SK-N-SH (cell line): ENCODE measurements at regions of chr1 and their contacts with region 1.

Region 1: GRCh38 chr1:246261639-246262038 is 245.4 kb downstream of the SMYD3 start:
- DNase-seq: no peak
- H3K4me3 ChIP-seq: no peak overlapping the region; a peak in 1 of 4 replicates
- H3K27ac ChIP-seq: no peak overlapping the region
- H3K4me1 ChIP-seq: no peaks in the 10 kb centered on the region
- H3K27me3 ChIP-seq: no peaks in the 10 kb centered on the region
- CTCF ChIP-seq: peak; percentile 50
- EP300 ChIP-seq: no peak
- RAD21 ChIP-seq: peak; percentile 46; the same call in 1 of the 2 replicates

Region 2: DNA sequence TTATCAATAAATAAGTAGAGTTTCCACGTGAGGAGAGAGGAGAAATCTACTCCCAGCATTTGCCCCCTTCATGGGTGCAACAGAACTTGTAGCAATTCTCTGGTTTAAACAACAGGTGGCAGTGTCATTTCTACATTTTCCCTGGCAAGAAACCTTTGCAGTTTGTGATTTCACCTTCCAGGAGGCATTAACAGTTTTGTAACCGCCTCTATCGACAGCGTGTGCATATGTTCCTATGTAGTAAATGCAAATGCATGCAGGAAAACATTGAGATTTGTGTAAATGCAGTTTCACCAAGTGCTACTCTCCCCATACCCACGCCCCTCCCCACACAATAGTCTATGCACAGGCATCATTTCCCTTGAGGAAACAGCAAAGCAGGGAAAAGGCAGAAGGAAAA is 249.3 kb before region 1 on chr1:
- CTCF ChIA-PET with region 1: interaction called, 10 read pairs
- POLR2A ChIA-PET with region 1: no interaction called
- DNase-seq: peak; percentile 58
- H3K4me3 ChIP-seq: no peak overlapping the region
- H3K27ac ChIP-seq: no peak overlapping the region
- H3K4me1 ChIP-seq: no peaks in the 10 kb centered on the region
- H3K27me3 ChIP-seq: no peaks in the 10 kb centered on the region
- CTCF ChIP-seq: peak; percentile 68
- EP300 ChIP-seq: no peak
- RAD21 ChIP-seq: peak; percentile 87

Region 3: DNA sequence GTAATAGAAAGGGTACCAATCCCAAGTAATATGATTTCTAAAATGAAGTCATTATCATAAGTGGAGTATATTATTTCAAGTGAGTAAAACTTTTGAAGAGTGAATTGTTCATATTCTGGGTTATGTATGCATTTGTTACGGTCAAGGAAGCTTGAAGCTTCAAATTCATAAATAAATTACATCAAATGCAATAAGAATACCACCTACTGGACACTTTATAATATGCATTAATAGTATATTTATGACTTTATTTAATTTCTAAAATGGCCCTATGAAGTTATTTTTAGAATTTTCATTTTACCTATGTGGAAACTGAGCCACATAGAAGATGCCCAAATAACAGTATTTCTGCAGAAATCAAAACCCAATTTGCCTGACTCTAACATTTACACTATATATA is 15.2 kb before region 1 on chr1:
- CTCF ChIA-PET with region 1: interaction called, 13 read pairs
- POLR2A ChIA-PET with region 1: no interaction called
- DNase-seq: no peak
- H3K4me3 ChIP-seq: no peak overlapping the region
- H3K27ac ChIP-seq: peak overlapping the region in 1 of 2 experiments; percentile 33; a peak in 2 of 4 replicates
- H3K4me1 ChIP-seq: no peaks in the 10 kb centered on the region; a peak in 1 of 4 replicates
- H3K27me3 ChIP-seq: no peaks in the 10 kb centered on the region
- CTCF ChIP-seq: peak; percentile 38
- EP300 ChIP-seq: no peak
- RAD21 ChIP-seq: peak; percentile 29; the same call in 1 of the 2 replicates

Region 4: DNA sequence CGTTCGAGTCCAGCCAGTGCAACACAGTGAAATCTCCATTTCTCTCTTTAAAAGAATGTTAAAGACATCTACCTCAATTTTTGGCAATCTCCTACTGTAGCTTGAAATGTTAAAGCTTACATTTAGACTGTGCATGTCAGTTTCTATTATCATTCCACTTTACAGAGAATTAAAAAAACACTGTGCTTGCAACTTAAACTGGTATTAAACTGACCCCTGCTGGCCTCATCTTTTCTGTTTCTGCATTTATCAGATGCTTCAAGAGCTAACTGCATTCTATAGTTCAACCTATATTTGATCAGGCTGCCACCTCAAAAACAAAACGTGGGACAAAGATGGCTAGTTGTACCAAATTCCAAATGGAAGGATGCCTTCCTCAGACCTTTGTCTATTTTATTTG is 18.9 kb after region 1 on chr1:
- CTCF ChIA-PET with region 1: interaction called, 15 read pairs
- POLR2A ChIA-PET with region 1: no interaction called
- DNase-seq: peak; percentile 25
- H3K4me3 ChIP-seq: no peak overlapping the region
- H3K27ac ChIP-seq: peak overlapping the region in 1 of 2 experiments; percentile 58; a peak in 1 of 4 replicates
- H3K4me1 ChIP-seq: peaks cover 0 to 13% of the 10 kb centered on the region in 2 experiments; a peak in 2 of 4 replicates
- H3K27me3 ChIP-seq: no peaks in the 10 kb centered on the region
- CTCF ChIP-seq: peak; percentile 70
- EP300 ChIP-seq: no peak
- RAD21 ChIP-seq: peak; percentile 84